Activated CD4-positive, alpha-beta T cell treated with anti-CD3 and anti-CD28 coated beads, Interleukin-2, amount 10 ng/mL, durations not matched to agents 24 days and 14 days (primary cell): ENCODE measurements at regions of chr6 and their contacts with region 1.

Region 1: GRCh38 chr6:26537846-26538571 is at the start of gene HMGN4:
- DNase-seq: peak; percentile 95
- H3K4me3 Mint-ChIP-seq: peak within 1 kb of the TSS; percentile 93
- H3K27ac Mint-ChIP-seq: peak within 1 kb of the TSS; percentile 95
- H3K4me1 Mint-ChIP-seq: peaks cover 51% of the 10 kb centered on the region
- H3K27me3 Mint-ChIP-seq: peaks cover 2% of the 10 kb centered on the region
- total RNA-seq, gene HMGN4: 81.6 and 83.4 TPM in 2 replicates

Region 2: GRCh38 chr6:26183581-26184366 is 354.2 kb before region 1 on chr6:
- intact Hi-C with region 1: loop called (anchors 5 kb)
- DNase-seq: peak; percentile 92
- H3K4me3 Mint-ChIP-seq: peak overlapping the region; percentile 93
- H3K27ac Mint-ChIP-seq: peak overlapping the region; percentile 98
- H3K4me1 Mint-ChIP-seq: peaks cover 55% of the 10 kb centered on the region
- H3K27me3 Mint-ChIP-seq: no peaks in the 10 kb centered on the region

Region 3: DNA sequence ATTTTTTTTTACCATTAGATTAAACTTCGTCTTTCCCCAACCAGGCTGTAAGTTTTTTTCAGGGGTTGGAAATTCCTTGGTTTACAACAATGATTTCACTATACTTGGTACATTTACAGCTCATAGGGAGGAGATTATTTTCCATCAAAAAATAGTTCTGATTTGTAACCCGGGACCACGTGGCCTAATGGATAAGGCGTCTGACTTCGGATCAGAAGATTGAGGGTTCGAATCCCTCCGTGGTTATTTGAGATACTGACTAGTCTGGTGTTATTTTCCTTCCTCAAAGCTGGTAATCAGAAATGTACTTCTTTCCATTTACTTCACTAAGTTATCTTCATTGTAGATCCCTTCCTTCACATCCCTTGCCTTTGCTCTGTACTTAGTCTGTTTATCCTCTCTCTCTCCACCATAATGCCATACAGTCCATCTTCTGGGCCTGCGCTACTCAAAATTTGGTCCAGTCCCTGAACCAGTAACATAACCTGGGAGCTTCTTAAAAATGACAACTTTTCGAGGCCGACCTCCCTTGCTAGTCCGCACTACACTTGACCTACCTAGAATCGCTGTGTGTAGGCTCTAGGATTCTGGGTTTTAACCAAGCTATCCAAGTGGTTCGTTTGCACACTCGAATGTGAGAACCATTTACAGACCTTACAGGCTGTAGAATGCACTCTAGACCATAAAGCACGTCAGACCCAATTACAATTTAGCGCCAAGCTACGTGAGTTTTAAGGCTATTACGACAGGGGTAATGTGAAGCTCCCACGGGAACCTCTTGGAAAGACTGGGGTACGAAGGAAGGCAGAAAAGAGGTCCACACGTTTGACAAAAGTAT is 215.1 kb before region 1 on chr6:
- intact Hi-C with region 1: loop called (anchors 1 kb)
- DNase-seq: peak; percentile 92
- H3K4me3 Mint-ChIP-seq: peak overlapping the region; percentile 89
- H3K27ac Mint-ChIP-seq: peak overlapping the region; percentile 93
- H3K4me1 Mint-ChIP-seq: peaks cover 37% of the 10 kb centered on the region
- H3K27me3 Mint-ChIP-seq: peaks cover 6% of the 10 kb centered on the region

Region 4: GRCh38 chr6:26501482-26501986 is 36.5 kb before region 1 on chr6:
- intact Hi-C with region 1: no loop called
- DNase-seq: peak; percentile 80
- H3K4me3 Mint-ChIP-seq: peak overlapping the region; percentile 81
- H3K27ac Mint-ChIP-seq: no peak overlapping the region
- H3K4me1 Mint-ChIP-seq: peaks cover 20% of the 10 kb centered on the region
- H3K27me3 Mint-ChIP-seq: peaks cover 49% of the 10 kb centered on the region

Region 5: DNA sequence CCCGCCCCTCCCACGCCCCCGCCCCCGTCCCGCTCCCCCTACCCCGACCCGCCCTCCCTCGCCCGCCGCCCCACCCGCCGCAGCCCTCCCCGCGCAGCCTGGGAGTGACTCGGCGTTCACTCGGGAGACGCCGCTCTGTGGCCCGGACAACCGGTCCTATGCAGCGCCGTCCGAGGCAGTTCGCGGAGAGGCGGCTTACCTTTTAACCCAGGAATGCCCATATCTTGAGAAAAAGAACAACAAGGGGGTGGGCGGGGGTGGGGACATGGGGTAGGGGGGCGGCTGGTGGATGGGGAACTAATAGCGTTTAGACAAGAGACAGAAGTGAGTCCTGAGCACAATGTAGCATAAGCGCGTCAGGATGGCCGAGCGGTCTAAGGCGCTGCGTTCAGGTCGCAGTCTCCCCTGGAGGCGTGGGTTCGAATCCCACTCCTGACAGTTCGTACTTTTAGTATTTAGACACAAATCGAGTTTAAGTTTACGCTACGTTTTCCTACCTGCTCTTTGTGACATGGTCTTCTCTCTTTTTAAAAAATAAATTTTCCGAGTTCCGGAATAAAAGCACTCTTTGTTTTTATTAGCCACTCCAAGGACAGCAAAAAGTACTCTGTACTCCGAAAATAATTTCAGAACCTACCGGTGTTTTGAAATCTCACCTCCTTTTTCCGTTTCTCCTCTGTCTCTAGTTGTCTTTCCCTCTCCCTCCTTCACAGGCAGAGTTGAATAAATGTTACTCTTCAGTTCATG is 17.0 kb before region 1 on chr6:
- intact Hi-C with region 1: loop called (anchors 1 kb)
- DNase-seq: peak; percentile 95
- H3K4me3 Mint-ChIP-seq: peak overlapping the region; percentile 85
- H3K27ac Mint-ChIP-seq: peak overlapping the region; percentile 94
- H3K4me1 Mint-ChIP-seq: peaks cover 32% of the 10 kb centered on the region
- H3K27me3 Mint-ChIP-seq: peaks cover 4% of the 10 kb centered on the region

Region 6: DNA sequence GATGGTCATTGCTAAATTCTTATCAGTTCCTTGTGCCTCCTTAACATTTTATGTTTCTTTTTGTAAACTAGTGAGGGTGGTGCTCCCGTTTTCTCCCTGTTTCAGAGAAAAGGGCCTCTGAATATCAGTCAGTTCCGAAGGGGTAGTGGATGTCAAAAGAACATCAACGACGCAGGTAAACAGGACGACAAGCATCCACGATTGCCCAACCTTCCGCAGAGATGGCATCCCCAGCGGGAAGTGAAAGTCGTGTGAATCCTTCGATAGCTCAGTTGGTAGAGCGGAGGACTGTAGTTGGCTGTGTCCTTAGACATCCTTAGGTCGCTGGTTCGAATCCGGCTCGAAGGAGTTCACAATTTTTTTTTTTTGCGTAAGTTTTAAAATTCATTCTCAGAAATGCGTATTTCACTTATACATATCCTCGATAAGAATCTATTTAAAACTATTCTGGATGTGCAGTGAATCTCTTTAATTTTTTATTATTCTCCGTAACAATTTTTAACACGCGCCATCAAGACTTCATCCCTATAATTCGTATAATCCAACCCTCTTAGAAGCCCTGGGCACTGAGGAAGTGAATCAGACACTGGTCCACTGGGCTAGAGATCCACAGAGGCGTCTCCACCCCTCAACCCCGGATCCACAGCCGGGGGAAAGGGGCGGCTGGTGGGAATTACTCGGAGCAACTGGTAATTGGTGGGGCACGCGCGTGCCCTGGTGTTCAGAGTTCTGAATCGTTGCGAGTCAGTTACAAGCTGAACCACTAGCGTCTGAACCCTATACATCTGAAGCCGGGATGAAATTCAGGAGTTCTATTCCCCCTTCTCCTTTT is 30.8 kb after region 1 on chr6:
- intact Hi-C with region 1: loop called (anchors 1 kb)
- DNase-seq: peak; percentile 99
- H3K4me3 Mint-ChIP-seq: peak overlapping the region; percentile 88
- H3K27ac Mint-ChIP-seq: peak overlapping the region; percentile 88
- H3K4me1 Mint-ChIP-seq: peaks cover 32% of the 10 kb centered on the region
- H3K27me3 Mint-ChIP-seq: peaks cover 5% of the 10 kb centered on the region